ENCODE measurements at regions of chr12 and their contacts with region 1.

Region 1: GRCh38 chr12:111685744-111686517 is at the starts of genes ACAD10 and BRAP:
- DNase-seq: peak; percentile 99
- CTCF ChIP-seq: no peak

Region 2: DNA sequence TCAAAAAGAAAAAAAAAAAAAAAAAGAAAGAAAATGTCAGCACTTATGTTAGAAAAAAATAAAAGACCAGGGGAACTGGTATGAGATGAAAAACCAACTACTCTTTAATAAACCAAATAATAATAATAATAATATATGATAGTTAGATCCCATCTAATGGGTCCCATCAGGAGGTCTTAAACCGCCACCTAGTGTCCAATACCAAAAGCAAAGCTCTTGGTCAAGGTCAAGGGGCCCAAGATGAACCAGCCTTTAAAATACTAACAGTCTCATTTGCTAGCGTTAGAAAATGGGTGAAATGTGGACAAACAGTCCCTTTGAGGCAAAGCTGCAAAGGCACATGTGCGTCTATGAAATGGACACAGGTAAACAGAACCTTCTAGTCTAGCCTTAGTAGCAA is 12.4 kb before region 1 on chr12:
- CTCF ChIA-PET with region 1: interaction called, 20 read pairs
- POLR2A ChIA-PET with region 1: no interaction called
- DNase-seq: no peak
- CTCF ChIP-seq: peak; percentile 37